Activated CD8-positive, alpha-beta T cell treated with anti-CD3 and anti-CD28 coated beads, Interleukin-2, amount 10 ng/mL, durations not matched to agents 7 days and 5 days (primary cell): ENCODE measurements at regions of chr12 and their contacts with region 1.

Region 1: GRCh38 chr12:46459861-46460545 is 87.4 kb upstream of the SLC38A2 start:
- DNase-seq: peak; percentile 40
- ATAC-seq: peak; percentile 45
- H3K4me3 Mint-ChIP-seq: peak overlapping the region; percentile 53
- H3K27ac Mint-ChIP-seq: peak overlapping the region; percentile 92
- H3K4me1 Mint-ChIP-seq: peaks cover 62% of the 10 kb centered on the region
- H3K27me3 Mint-ChIP-seq: no peaks in the 10 kb centered on the region

Region 2: GRCh38 chr12:46382964-46383653 is 76.9 kb before region 1 on chr12:
- CTCF ChIA-PET with region 1: interaction called, 6 read pairs
- POLR2A ChIA-PET with region 1: interaction called, 14 read pairs
- DNase-seq: peak; percentile 96
- ATAC-seq: peak; percentile 87
- H3K4me3 Mint-ChIP-seq: peak overlapping the region; percentile 85
- H3K27ac Mint-ChIP-seq: peak overlapping the region; percentile 95
- H3K4me1 Mint-ChIP-seq: peaks cover 44% of the 10 kb centered on the region
- H3K27me3 Mint-ChIP-seq: no peaks in the 10 kb centered on the region

Region 3: DNA sequence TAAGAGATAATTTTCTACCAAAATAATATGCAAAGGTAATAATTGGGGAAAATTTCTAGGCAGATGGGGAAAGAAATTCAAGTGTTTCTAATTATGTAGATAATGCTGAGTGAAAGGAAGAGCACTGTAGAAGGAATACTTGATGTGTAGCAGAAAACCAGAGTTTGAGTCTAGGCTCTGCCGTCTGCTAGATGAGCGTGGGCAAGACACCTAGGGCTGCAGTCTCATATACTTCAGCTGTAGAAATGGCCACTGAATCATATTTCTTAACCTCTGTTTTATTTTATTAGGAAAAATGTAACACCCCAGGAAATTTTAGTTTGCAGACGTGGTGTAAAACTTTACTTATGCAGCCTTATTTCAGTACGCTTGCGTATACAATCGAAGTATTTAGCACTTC is 27.7 kb before region 1 on chr12:
- CTCF ChIA-PET with region 1: no interaction called
- POLR2A ChIA-PET with region 1: no interaction called
- DNase-seq: no peak
- ATAC-seq: no peak
- H3K4me3 Mint-ChIP-seq: no peak overlapping the region
- H3K27ac Mint-ChIP-seq: no peak overlapping the region
- H3K4me1 Mint-ChIP-seq: peaks cover 23% of the 10 kb centered on the region
- H3K27me3 Mint-ChIP-seq: no peaks in the 10 kb centered on the region

Region 4: GRCh38 chr12:46470036-46470627 is 10.1 kb after region 1 on chr12:
- CTCF ChIA-PET with region 1: interaction called, 17 read pairs
- POLR2A ChIA-PET with region 1: interaction called, 12 read pairs
- DNase-seq: peak; percentile 73
- ATAC-seq: peak; percentile 97
- H3K4me3 Mint-ChIP-seq: peak overlapping the region; percentile 87
- H3K27ac Mint-ChIP-seq: peak overlapping the region; percentile 98
- H3K4me1 Mint-ChIP-seq: peaks cover 36% of the 10 kb centered on the region
- H3K27me3 Mint-ChIP-seq: no peaks in the 10 kb centered on the region

Region 5: DNA sequence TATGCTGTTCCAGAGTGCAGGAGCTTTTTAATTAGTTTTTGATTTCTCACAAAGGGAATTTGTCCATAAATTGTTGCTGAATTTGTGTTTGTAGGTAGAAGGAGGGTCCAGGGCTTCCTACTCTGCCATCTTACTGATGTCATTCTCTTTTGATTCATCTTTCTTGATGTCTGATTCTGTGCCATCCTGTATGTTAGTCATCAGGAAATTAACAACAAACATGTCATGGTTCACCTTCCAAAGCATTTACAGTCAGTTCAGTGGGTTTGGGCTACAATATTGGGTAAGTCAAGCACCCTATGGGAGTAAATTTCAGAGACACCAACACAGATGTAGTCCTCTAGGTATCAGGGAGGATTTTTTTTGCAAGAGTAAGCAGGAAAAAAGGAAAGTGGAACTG is 47.8 kb after region 1 on chr12:
- CTCF ChIA-PET with region 1: no interaction called
- POLR2A ChIA-PET with region 1: no interaction called
- DNase-seq: no peak
- ATAC-seq: no peak
- H3K4me3 Mint-ChIP-seq: no peak overlapping the region
- H3K27ac Mint-ChIP-seq: no peak overlapping the region
- H3K4me1 Mint-ChIP-seq: peaks cover 4% of the 10 kb centered on the region
- H3K27me3 Mint-ChIP-seq: no peaks in the 10 kb centered on the region